Ascending aorta (tissue), 2 donors: ENCODE measurements at regions of chr10 and their contacts with region 1.

Region 1: GRCh38 chr10:71835671-71836595 is 15.1 kb downstream of the PSAP start:
- DNase-seq: peak; percentile 63 to 93
- H3K4me3 ChIP-seq: peak overlapping the region in 1 of 2 donors; percentile 29
- H3K27ac ChIP-seq: peak overlapping the region; percentile 89 to 93
- H3K4me1 ChIP-seq: peaks cover 17 to 39% of the 10 kb centered on the region in 2 donors
- H3K27me3 ChIP-seq: no peaks in the 10 kb centered on the region
- CTCF ChIP-seq: no peak

Region 2: DNA sequence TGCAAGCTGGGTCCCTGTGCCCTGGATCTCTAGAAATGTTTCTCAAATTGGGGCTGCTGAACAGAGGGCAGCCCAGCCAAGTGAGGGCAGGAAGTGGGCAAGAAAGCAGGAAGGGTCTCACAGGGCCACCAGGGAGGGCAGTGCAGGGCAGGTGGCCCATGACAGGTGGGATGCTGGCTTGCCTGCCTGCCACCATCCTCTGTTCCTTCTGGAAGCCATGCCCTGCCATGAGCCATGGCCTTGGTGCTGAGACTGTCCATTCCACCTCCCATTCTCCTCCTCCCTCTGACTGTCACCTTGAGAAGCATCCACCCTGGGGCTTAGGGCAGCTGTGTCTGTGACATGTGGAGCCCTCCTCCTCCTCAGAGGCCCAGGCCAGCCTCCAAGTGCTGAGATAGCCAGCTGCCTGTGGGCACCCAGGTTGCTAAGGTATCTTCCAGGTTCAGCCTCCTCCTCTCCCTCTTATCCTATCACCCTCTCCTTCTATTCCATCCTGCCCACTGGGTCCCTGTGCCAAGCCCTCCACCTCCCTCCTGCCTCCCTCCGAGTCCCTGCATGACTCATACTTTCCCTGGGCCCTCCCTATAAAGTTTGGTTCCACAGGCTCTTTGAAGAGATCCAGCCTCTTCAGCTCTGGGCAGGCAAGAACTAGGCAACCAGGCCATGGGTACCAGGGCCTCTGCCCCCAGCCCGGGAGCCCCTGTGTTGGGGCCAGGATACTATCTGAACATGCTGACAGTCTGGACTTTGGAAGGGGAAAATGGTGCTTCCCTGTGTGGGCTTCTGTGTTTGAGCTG is 63.9 kb before region 1 on chr10:
- intact Hi-C with region 1: loop called (anchors 5 kb)
- DNase-seq: peak; percentile 64 to 93
- H3K4me3 ChIP-seq: peak overlapping the region; percentile 69 to 85
- H3K27ac ChIP-seq: peak overlapping the region; percentile 94 to 98
- H3K4me1 ChIP-seq: peaks cover 40 to 54% of the 10 kb centered on the region in 2 donors
- H3K27me3 ChIP-seq: no peaks in the 10 kb centered on the region
- CTCF ChIP-seq: no peak

Region 3: GRCh38 chr10:71850637-71851464 is 14.9 kb after region 1 on chr10 and contains the start of gene PSAP:
- intact Hi-C with region 1: loop called (anchors 1 kb)
- DNase-seq: peak; percentile 97 to 100
- H3K4me3 ChIP-seq: peak within 1 kb of the TSS; percentile 93 to 97
- H3K27ac ChIP-seq: peak within 1 kb of the TSS; percentile 97
- H3K4me1 ChIP-seq: peaks cover 0 to 25% of the 10 kb centered on the region in 2 donors
- H3K27me3 ChIP-seq: no peaks in the 10 kb centered on the region
- CTCF ChIP-seq: no peak
- total RNA-seq, gene PSAP: 653 TPM

Region 4: DNA sequence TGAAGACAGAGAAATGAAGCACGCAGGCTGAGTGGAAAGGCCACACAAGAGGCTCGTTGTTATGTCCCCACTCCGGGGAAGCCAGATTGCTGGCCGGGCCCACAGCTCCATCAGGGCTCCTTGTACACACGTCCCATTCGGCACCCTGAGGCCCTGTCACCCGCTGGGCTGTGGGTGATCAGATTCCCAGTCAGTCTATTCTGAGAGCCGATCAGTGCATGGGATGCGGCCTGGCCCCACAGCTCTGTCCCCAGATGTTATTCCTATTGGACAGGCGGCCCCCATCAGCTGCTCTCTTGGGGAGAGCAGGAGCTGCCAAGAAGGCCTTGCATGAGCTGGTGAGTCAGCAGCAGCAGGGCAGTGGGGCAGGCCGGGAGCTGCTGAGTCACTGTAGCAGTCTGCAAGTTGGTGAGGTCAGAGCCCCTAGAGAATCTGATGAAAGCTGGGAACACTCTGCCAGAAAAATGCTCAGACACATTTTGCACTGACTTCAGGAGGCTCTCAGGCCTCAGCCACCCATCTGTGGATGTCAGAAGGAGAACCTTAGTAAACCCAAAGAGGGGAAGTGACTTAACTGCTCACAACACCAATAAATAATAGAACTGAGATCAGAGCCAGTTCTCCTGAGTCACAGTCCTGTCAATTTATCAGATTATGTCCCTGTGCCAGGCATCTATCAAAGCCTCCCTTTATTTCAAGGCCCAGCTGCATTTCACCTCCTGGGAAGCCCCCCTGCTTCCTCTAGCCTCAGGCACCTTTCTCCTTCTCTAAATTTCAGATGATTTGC is 24.5 kb after region 1 on chr10:
- intact Hi-C with region 1: loop called (anchors 1 kb)
- DNase-seq: peak; percentile 97 to 99
- H3K4me3 ChIP-seq: no peak overlapping the region
- H3K27ac ChIP-seq: peak overlapping the region; percentile 94 to 99
- H3K4me1 ChIP-seq: peaks cover 10 to 21% of the 10 kb centered on the region in 2 donors
- H3K27me3 ChIP-seq: no peaks in the 10 kb centered on the region
- CTCF ChIP-seq: no peak

Region 5: DNA sequence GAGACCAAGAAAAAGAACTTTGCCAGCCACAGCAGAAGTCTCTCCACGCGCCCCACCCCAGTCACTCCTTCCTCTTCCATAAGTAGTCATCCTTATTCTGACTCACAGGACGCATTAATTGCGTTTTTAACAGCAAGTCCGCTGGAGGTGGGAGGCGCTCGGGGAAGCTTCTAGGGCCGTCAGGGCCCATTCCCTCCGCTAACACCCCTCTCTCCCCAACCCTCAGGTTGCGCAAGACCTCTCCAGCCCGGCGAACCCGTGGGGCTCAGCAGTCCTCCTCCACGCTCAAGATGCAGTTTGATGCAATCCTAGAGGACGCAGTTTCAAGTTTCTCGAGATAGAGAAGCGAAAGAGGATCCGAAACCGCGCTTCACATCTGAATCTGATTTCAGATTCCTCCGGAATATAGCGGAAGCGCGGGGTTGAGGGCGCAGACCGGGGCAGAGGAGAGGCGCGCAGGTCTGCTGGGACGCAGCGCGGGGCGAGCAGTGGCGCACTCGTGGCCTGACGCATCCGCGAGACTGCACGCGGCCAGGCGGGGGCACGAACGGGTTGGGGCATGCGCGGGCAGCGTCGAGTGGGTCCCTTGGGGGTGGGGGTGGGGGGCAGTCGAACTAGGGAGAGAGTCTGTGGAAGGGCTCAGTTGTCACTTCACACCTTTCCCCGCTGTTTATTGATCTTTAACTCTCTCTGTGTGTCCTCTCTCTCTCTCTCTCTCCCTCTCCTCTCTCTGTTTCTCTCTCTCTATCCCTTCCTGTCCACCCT is 52.9 kb after region 1 on chr10:
- intact Hi-C with region 1: loop called (anchors 2 kb)
- DNase-seq: peak; percentile 62 to 90
- H3K4me3 ChIP-seq: peak overlapping the region; percentile 64 to 76
- H3K27ac ChIP-seq: peak overlapping the region; percentile 71 to 83
- H3K4me1 ChIP-seq: no peaks in the 10 kb centered on the region
- H3K27me3 ChIP-seq: no peaks in the 10 kb centered on the region
- CTCF ChIP-seq: peak; percentile 7 to 20 (median 17)